Right ventricle myocardium inferior (tissue), 1 donor: ENCODE measurements at regions of chr6 and their contacts with region 1.

Region 1: GRCh38 chr6:20092071-20092566 is 120.2 kb downstream of the MBOAT1 start:
- DNase-seq: no peak
- ATAC-seq: peak; percentile 42

Region 2: GRCh38 chr6:20126789-20127653 is 34.9 kb after region 1 on chr6:
- intact Hi-C with region 1: loop called (anchors 5 kb)
- DNase-seq: peak; percentile 84
- ATAC-seq: peak; percentile 86

Region 3: GRCh38 chr6:20274137-20274536 is 182.0 kb after region 1 on chr6:
- intact Hi-C with region 1: loop called (anchors 5 kb)
- DNase-seq: no peak
- ATAC-seq: no peak

Region 4: DNA sequence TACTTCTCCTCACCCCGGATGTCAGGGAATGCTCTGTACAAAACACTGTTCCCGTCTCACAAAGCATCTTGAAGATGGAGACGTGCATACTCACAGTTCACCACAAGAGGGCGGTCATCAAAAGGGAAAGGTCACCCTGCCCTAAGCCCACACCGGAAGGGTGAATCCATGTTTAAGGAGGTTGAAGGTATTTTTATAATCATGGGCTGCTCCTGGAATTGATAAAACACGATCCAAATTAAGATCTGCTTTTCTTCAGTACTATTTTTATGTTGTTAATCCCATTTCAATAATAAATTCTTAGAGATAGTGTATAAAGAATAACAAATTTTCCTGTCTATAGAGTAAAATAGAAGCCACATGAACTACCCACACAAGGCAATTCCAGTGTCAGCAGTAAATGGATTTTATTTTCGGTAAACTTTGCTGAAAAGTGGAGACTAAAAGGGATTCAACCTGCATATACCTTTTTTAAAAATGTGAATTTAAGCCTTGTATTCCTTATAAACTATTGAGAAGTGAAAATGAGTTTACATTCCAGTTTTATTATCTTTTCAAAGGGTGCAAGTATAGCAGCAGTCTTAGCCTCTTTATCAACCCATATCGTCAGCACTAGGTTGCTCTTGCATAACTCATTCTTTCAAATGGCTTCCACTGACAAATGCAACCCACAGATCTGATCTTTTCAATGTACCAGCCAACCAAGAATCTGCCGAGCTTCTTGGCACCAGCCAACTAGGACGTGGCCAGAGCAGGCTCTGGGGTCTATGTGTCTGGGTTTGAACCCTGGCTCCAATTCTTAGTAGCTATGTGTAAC is 199.9 kb after region 1 on chr6:
- intact Hi-C with region 1: loop called (anchors 5 kb)
- DNase-seq: no peak
- ATAC-seq: peak; percentile 83

Region 5: GRCh38 chr6:20534295-20535262 is 442.5 kb after region 1 on chr6 and contains the start of gene CDKAL1:
- intact Hi-C with region 1: loop called (anchors 2 kb)
- DNase-seq: peak; percentile 88
- ATAC-seq: peak; percentile 93
- total RNA-seq, gene CDKAL1: 11.6 TPM